CD4-positive, alpha-beta memory T cell (primary cell): ENCODE measurements at regions of chr12 and their contacts with region 1.

Region 1: GRCh38 chr12:92649511-92650227 is 53.1 kb upstream of the PLEKHG7 start:
- DNase-seq: peak; percentile 55 to 68 (median 59)
- H3K4me3 ChIP-seq: no peak overlapping the region
- H3K4me3 Mint-ChIP-seq: no peak overlapping the region
- H3K27ac ChIP-seq: no peak overlapping the region
- H3K27ac Mint-ChIP-seq: peak overlapping the region in 5 of 7 donors; percentile 31 to 74 (median 46)
- H3K4me1 ChIP-seq: no peaks in the 10 kb centered on the region
- H3K4me1 Mint-ChIP-seq: peaks cover 0 to 6% (median 4%) of the 10 kb centered on the region in 4 donors
- H3K27me3 ChIP-seq: no peaks in the 10 kb centered on the region
- H3K27me3 Mint-ChIP-seq: peaks cover 0 to 2% of the 10 kb centered on the region in 2 donors

Region 2: GRCh38 chr12:90940872-90941499 is 1708.7 kb before region 1 on chr12:
- CTCF ChIA-PET with region 1: no interaction called
- POLR2A ChIA-PET with region 1: no interaction called
- intact Hi-C with region 1: loop called (anchors 10 kb)
- DNase-seq: peak in 2 of 5 donors; percentile 9
- H3K4me3 ChIP-seq: no peak overlapping the region
- H3K4me3 Mint-ChIP-seq: no peak overlapping the region
- H3K27ac ChIP-seq: no peak overlapping the region
- H3K27ac Mint-ChIP-seq: no peak overlapping the region
- H3K4me1 ChIP-seq: no peaks in the 10 kb centered on the region
- H3K4me1 Mint-ChIP-seq: no peaks in the 10 kb centered on the region
- H3K27me3 ChIP-seq: no peaks in the 10 kb centered on the region
- H3K27me3 Mint-ChIP-seq: peaks cover 4 to 5% of the 10 kb centered on the region in 2 donors

Region 3: DNA sequence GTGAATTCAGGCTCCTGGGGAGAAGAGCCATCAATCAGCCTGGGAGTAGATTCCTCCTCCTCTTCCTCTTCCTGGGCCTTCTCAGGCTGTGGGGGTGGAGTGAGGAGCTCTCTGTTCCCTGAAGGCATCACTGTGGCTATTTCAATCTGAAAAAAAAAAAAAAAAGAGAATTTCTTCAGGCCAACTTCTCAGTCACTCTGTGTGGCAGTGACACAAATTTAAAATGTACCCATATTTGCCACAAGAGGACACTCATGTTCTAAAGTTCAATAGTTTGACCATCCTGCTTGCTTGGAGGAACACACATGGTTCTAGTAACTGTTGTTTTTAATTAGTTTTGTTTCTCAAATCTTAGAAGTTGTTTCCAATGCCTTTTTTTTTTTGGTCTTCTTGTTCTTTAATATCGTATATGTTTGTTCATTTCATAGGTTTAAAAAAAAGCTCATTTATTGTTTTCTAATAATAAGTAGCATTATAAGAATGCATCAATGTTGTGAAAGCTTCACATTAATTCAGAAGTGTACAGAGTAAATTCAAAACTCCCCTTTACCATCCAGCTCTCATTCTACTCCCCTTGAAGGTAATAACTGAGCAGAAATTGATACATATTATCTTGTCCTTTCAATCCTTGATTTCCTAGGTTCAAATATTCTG is 1671.4 kb before region 1 on chr12:
- CTCF ChIA-PET with region 1: no interaction called
- POLR2A ChIA-PET with region 1: no interaction called
- intact Hi-C with region 1: loop called (anchors 5 kb)
- DNase-seq: peak in 2 of 5 donors; percentile 5
- H3K4me3 ChIP-seq: no peak overlapping the region
- H3K4me3 Mint-ChIP-seq: no peak overlapping the region
- H3K27ac ChIP-seq: no peak overlapping the region
- H3K27ac Mint-ChIP-seq: no peak overlapping the region
- H3K4me1 ChIP-seq: no peaks in the 10 kb centered on the region
- H3K4me1 Mint-ChIP-seq: no peaks in the 10 kb centered on the region
- H3K27me3 ChIP-seq: no peaks in the 10 kb centered on the region
- H3K27me3 Mint-ChIP-seq: peaks cover 0 to 1% of the 10 kb centered on the region in 2 donors

Region 4: GRCh38 chr12:91361864-91362263 is 1287.8 kb before region 1 on chr12:
- CTCF ChIA-PET with region 1: interaction called, 4 read pairs
- POLR2A ChIA-PET with region 1: no interaction called
- intact Hi-C with region 1: loop called (anchors 1 kb)
- DNase-seq: peak in 4 of 5 donors; percentile 32 to 39 (median 35)
- H3K4me3 ChIP-seq: no peak overlapping the region
- H3K4me3 Mint-ChIP-seq: no peak overlapping the region
- H3K27ac ChIP-seq: no peak overlapping the region
- H3K27ac Mint-ChIP-seq: no peak overlapping the region
- H3K4me1 ChIP-seq: no peaks in the 10 kb centered on the region
- H3K4me1 Mint-ChIP-seq: peaks cover 0 to 2% (median 0%) of the 10 kb centered on the region in 4 donors
- H3K27me3 ChIP-seq: no peaks in the 10 kb centered on the region
- H3K27me3 Mint-ChIP-seq: peaks cover 1 to 9% of the 10 kb centered on the region in 2 donors

Region 5: DNA sequence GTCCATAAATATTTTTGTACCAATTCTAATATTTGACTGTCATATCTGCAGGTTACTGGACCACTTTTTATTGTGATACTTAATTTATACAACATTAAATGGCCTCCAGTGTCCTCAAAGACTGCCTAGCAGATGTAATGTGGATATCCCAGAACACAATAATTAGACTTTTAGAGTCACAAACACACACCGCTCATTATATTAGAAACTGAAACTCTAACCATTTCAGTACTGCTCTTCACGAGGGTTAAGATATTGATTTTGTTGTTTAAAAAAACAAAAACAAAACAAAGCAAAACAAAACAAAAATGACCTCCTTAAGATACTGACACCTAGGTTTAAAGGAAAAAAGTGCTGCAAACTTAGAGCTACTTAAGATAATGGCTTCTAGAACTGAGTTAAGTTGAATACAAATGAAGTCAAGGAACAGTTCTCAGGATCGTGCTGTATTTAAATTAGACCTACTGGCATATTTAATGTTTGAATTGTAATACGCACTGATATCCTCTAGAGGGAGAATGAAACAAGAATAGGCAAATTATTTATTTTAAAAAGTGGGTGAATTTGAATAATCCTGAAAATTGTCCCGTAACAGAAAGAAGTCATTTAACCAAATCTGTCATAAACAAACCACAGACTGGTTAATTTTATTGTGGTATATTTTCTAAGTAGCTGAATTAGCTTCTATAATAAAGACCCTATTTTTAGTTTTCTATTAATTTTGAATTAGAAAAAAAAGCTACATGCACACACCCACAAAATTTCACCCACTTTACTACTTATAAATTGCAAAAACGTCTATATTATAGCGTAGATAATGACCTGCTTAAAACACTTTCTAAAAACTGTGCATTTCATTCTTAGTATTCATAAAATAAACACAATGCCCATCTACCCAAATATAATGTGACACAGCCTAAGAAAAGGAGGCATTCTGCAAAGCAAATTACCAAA is 1071.8 kb before region 1 on chr12:
- CTCF ChIA-PET with region 1: interaction called, 8 read pairs
- POLR2A ChIA-PET with region 1: no interaction called
- intact Hi-C with region 1: loop called (anchors 2 kb)
- DNase-seq: peak in 4 of 5 donors; percentile 33 to 44 (median 42)
- H3K4me3 ChIP-seq: peak overlapping the region; percentile 18 to 50
- H3K4me3 Mint-ChIP-seq: peak overlapping the region; percentile 77 to 91 (median 84)
- H3K27ac ChIP-seq: no peak overlapping the region
- H3K27ac Mint-ChIP-seq: peak overlapping the region in 5 of 7 donors; percentile 33 to 91 (median 77)
- H3K4me1 ChIP-seq: peaks cover 4% of the 10 kb centered on the region
- H3K4me1 Mint-ChIP-seq: peaks cover 4 to 9% (median 5%) of the 10 kb centered on the region in 4 donors
- H3K27me3 ChIP-seq: no peaks in the 10 kb centered on the region
- H3K27me3 Mint-ChIP-seq: peaks cover 1 to 3% of the 10 kb centered on the region in 2 donors

Region 6: DNA sequence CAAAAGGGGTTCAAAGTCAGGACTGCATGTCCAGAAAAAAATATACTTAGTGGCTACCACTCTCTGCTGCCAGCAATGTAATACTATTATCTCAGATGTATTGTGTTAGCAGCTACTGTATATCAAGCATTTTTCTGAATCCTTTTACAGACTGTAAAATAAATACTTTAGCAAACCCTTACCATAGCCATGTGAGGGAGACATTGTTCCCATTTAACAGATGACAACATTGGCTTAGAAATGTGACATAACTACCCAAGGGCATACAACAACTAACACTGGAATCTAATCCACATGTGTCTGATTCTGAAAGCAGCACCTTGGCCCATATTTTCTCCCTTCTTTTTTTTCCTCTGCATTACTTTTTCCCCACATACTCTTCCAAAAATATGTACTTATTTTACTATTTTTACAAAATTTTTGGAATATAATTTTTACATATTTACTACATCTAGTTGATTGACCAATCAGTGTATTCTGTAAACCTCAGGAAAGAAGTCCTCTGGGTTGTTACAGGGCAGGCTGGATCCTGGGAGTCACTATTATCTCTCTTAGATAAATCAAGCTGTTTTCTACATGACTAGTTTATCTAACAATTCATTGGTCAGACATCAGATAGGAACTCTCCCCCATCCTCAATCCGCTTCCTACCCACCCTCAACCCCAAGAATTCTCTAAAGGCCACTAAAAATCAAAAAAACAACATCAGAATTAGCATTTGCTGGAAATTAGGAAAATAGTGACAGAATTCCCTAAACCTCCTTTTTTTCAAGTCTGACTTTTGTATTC is 658.1 kb before region 1 on chr12:
- CTCF ChIA-PET with region 1: interaction called, 6 read pairs
- POLR2A ChIA-PET with region 1: no interaction called
- intact Hi-C with region 1: loop called (anchors 1 kb)
- DNase-seq: peak in 4 of 5 donors; percentile 51 to 67 (median 54)
- H3K4me3 ChIP-seq: no peak overlapping the region
- H3K4me3 Mint-ChIP-seq: no peak overlapping the region
- H3K27ac ChIP-seq: no peak overlapping the region
- H3K27ac Mint-ChIP-seq: peak overlapping the region in 5 of 7 donors; percentile 22 to 85 (median 70)
- H3K4me1 ChIP-seq: peaks cover 27% of the 10 kb centered on the region
- H3K4me1 Mint-ChIP-seq: peaks cover 18 to 37% (median 28%) of the 10 kb centered on the region in 4 donors
- H3K27me3 ChIP-seq: no peaks in the 10 kb centered on the region
- H3K27me3 Mint-ChIP-seq: no peaks in the 10 kb centered on the region

Region 7: DNA sequence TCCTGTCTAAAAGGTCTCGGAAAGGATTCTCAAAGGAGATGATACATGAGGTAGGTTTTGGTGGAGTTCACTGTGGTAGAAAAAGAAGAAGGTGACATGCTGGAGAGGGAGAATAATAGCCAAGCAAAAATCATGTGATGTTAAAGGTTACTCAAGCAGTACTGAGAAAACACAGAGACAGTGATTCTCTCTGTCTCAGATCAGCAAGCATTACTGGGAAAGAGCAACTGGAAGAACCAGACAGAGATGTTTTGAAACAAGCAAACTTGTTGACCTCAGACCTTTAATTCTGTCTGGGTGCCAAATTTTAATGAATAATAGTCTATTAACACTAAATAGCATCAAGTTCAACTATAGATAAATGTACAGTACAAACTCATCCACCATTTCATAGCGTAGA is 130.4 kb before region 1 on chr12:
- CTCF ChIA-PET with region 1: no interaction called
- POLR2A ChIA-PET with region 1: no interaction called
- intact Hi-C with region 1: no loop called
- DNase-seq: no peak
- H3K4me3 ChIP-seq: no peak overlapping the region
- H3K4me3 Mint-ChIP-seq: no peak overlapping the region
- H3K27ac ChIP-seq: no peak overlapping the region
- H3K27ac Mint-ChIP-seq: no peak overlapping the region
- H3K4me1 ChIP-seq: peaks cover 1% of the 10 kb centered on the region
- H3K4me1 Mint-ChIP-seq: peaks cover 2 to 22% (median 10%) of the 10 kb centered on the region in 4 donors
- H3K27me3 ChIP-seq: no peaks in the 10 kb centered on the region
- H3K27me3 Mint-ChIP-seq: no peaks in the 10 kb centered on the region

Region 8: GRCh38 chr12:92593734-92594402 is 55.8 kb before region 1 on chr12:
- CTCF ChIA-PET with region 1: interaction called, 7 read pairs
- POLR2A ChIA-PET with region 1: interaction called, 9 read pairs
- intact Hi-C with region 1: loop called (anchors 1 kb)
- DNase-seq: peak; percentile 87 to 97 (median 94)
- H3K4me3 ChIP-seq: peak overlapping the region in 1 of 2 donors; percentile 37
- H3K4me3 Mint-ChIP-seq: peak overlapping the region in 7 of 8 donors; percentile 43 to 88 (median 71)
- H3K27ac ChIP-seq: peak overlapping the region; percentile 91
- H3K27ac Mint-ChIP-seq: peak overlapping the region; percentile 86 to 100 (median 100)
- H3K4me1 ChIP-seq: peaks cover 35% of the 10 kb centered on the region
- H3K4me1 Mint-ChIP-seq: peaks cover 27 to 38% (median 35%) of the 10 kb centered on the region in 4 donors
- H3K27me3 ChIP-seq: no peaks in the 10 kb centered on the region
- H3K27me3 Mint-ChIP-seq: no peaks in the 10 kb centered on the region